Right ventricle myocardium inferior (tissue), 1 donor: ENCODE measurements at regions of chr2 and their contacts with region 1.

Region 1: GRCh38 chr2:179410552-179411356 is 146.1 kb upstream of the SESTD1 start:
- DNase-seq: no peak
- ATAC-seq: peak; percentile 68

Region 2: DNA sequence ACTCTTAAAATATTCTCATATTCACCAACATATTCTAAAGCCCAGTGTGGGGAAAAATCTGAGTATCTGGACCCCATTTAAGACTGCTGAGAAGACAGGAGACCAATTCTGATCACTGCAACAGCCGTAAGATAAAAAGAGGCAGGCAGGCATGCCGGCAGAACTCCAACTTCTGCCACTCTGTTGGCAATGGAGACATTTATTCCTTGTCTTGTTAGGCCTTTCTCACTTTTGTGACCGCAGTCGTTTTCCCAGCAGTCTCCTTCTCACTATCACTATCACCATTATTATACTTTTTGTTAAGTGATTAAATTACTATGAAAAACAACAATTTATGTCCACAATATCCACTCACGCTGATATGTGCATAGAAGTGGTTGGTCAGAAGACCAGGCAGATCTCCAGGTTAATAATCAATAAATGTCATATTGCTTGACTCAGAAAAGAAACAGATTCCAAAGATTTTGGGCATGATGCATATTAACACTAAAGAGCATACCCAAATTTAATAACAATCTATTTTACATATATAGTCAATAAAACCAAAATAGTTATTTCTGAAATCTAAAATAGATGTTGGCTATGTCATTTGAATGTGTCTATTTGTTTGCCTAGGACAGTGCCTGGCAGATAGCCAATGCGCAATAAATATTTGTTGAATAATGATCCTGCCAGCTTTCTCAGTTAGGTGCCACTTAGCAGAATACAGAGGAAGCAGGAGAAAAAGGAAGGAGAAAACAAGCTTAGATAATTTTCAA is 184.4 kb before region 1 on chr2:
- intact Hi-C with region 1: loop called (anchors 10 kb)
- DNase-seq: no peak
- ATAC-seq: peak; percentile 36